Pancreas (tissue), 10 donors: ENCODE measurements at regions of chr7 and their contacts with region 1.

Region 1: GRCh38 chr7:138002096-138002827 is 376 bp upstream of the CREB3L2 start:
- DNase-seq: peak; percentile 97 to 100 (median 99)
- ATAC-seq: peak; percentile 91 to 97 (median 92)
- H3K4me3 ChIP-seq: peak overlapping the region; percentile 69 to 97 (median 90)
- H3K27ac ChIP-seq: peak overlapping the region; percentile 89 to 96 (median 93)
- H3K4me1 ChIP-seq: peaks cover 0 to 9% (median 7%) of the 10 kb centered on the region in 3 donors
- H3K27me3 ChIP-seq: no peaks in the 10 kb centered on the region
- CTCF ChIP-seq: peak; percentile 80 to 95 (median 85)

Region 2: DNA sequence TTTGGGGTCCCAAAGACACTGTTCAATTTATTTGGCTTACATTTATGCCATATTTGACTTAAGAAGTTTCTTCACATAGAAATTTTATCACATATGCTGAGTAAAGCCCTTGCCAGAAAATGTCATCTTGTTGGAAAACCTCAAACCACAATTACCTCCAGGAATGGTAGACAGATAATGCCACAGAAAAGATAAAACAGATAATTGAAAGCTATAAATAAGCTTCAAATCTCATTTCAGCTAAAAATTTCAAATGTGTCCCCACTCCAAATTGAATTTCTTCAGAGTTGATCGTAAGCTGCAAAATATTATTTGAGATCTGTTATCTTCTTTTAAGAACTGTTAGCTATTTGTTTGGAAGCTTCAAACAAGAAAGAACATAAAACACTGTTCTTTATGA is 482.3 kb before region 1 on chr7:
- intact Hi-C with region 1: no loop called
- DNase-seq: no peak
- ATAC-seq: no peak
- H3K4me3 ChIP-seq: no peak overlapping the region
- H3K27ac ChIP-seq: no peak overlapping the region
- H3K4me1 ChIP-seq: no peaks in the 10 kb centered on the region
- H3K27me3 ChIP-seq: no peaks in the 10 kb centered on the region
- CTCF ChIP-seq: no peak

Region 3: DNA sequence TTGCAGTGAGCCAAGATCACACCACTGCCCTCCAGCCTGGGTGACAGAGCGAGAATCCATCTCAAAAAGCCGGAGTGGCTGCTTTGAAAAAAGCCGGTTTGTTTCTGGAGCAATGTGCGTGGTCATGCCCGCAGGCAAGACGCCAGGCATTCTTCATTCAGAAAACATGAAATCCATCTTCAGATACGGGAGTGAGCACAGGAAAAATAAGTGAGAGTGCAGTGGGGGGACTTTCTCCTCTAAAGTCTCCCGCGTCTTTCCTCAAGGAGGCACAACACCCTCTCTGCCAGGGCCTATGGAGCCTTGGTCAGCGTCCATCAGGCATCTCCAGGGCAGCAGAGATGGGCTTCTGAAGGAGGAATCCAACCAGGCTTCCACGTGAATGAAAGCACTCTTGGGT is 93.2 kb before region 1 on chr7:
- intact Hi-C with region 1: loop called (anchors 5 kb)
- DNase-seq: no peak
- ATAC-seq: no peak
- H3K4me3 ChIP-seq: no peak overlapping the region
- H3K27ac ChIP-seq: no peak overlapping the region
- H3K4me1 ChIP-seq: no peaks in the 10 kb centered on the region
- H3K27me3 ChIP-seq: no peaks in the 10 kb centered on the region
- CTCF ChIP-seq: no peak